PC-3 (cell line): ENCODE measurements at regions of chr5 and their contacts with region 1.

Region 1: DNA sequence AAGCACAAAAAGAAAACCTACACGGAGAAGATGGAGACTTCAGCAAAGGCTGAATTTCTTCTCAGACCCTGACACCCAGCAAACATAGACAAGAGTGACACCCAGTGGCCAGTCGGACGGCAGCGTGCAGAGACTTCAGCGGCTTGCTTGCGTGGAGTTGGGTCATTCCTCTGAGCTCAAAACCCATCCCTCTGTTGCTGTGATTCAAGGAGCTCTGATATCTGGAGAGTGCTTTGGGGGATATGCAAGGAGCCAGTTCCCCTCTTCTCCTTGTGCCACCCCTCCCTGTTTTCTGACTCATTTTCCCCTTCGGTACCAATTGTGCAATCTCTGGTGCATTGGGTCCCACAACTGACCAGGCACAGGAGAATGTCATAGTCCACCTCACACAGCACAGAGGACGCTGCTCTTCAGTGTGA is 27.5 kb downstream of the SH3TC2 start:
- DNase-seq: peak; percentile 98
- ATAC-seq: peak; percentile 92
- H3K4me3 ChIP-seq: no peak overlapping the region
- H3K27ac ChIP-seq: no peak overlapping the region
- H3K4me1 ChIP-seq: peaks cover 42% of the 10 kb centered on the region
- H3K27me3 ChIP-seq: no peaks in the 10 kb centered on the region
- CTCF ChIP-seq: peak; percentile 100

Region 2: GRCh38 chr5:148826053-148826738 is 209.2 kb before region 1 on chr5 and contains the start of gene ADRB2:
- CTCF ChIA-PET with region 1: interaction called, 5 read pairs
- POLR2A ChIA-PET with region 1: interaction called, 3 read pairs
- intact Hi-C with region 1: loop called (anchors 2 kb)
- DNase-seq: peak; percentile 100
- ATAC-seq: peak; percentile 83
- H3K4me3 ChIP-seq: peak within 1 kb of the TSS; percentile 73
- H3K27ac ChIP-seq: peak within 1 kb of the TSS; percentile 69
- H3K4me1 ChIP-seq: peaks cover 51% of the 10 kb centered on the region
- H3K27me3 ChIP-seq: no peaks in the 10 kb centered on the region
- CTCF ChIP-seq: no peak
- total RNA-seq, gene ADRB2: 41.1 and 42.1 TPM in 2 replicates

Region 3: GRCh38 chr5:148957591-148958202 is 77.7 kb before region 1 on chr5:
- CTCF ChIA-PET with region 1: interaction called, 13 read pairs
- POLR2A ChIA-PET with region 1: no interaction called
- intact Hi-C with region 1: loop called (anchors 2 kb)
- DNase-seq: peak; percentile 86
- ATAC-seq: no peak
- H3K4me3 ChIP-seq: no peak overlapping the region
- H3K27ac ChIP-seq: no peak overlapping the region
- H3K4me1 ChIP-seq: peaks cover 49% of the 10 kb centered on the region
- H3K27me3 ChIP-seq: no peaks in the 10 kb centered on the region
- CTCF ChIP-seq: peak; percentile 100

Region 4: GRCh38 chr5:149011074-149011476 is 24.3 kb before region 1 on chr5:
- CTCF ChIA-PET with region 1: interaction called, 12 read pairs
- POLR2A ChIA-PET with region 1: interaction called, 6 read pairs
- intact Hi-C with region 1: no loop called
- DNase-seq: peak; percentile 100
- ATAC-seq: peak; percentile 88
- H3K4me3 ChIP-seq: no peak overlapping the region
- H3K27ac ChIP-seq: peak overlapping the region; percentile 52
- H3K4me1 ChIP-seq: peaks cover 54% of the 10 kb centered on the region
- H3K27me3 ChIP-seq: no peaks in the 10 kb centered on the region
- CTCF ChIP-seq: peak; percentile 28

Region 5: DNA sequence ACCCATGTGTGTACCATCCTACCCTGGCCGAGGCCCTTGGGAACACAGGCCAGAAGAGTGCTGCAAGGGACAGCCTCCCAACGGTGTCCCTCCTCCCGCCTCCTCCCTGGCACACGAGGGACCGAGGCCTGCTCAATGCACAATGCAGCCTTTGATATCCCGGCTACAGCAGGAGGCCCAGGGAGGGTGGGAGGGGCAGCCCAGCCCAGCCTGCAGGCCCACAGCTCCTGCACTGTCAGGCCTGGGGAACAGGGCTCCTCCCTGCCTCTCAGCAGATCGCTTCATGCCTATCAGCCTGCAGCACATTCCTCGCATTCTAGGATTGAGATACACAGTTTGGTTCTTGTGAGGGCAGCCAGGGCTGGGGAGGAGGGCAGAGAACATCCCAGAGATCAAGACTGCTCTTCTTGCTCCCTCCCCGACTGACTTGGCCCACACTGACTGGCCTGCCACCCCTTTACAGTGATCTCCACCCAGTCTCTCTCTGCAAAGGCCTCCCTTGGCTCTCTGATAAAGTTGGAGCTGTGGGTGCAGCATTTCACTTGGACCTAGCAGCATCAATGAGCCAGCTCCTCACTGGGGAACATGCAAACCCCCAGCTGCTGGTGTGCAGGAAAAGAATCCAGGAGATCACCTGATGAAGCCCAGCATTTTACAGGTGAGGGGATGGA is 27.8 kb after region 1 on chr5 and contains the start of gene SH3TC2:
- CTCF ChIA-PET with region 1: interaction called, 7 read pairs
- POLR2A ChIA-PET with region 1: no interaction called
- intact Hi-C with region 1: loop called (anchors 1 kb)
- DNase-seq: peak; percentile 96
- ATAC-seq: peak; percentile 76
- H3K4me3 ChIP-seq: peak within 1 kb of the TSS; percentile 47
- H3K27ac ChIP-seq: peak within 1 kb of the TSS; percentile 95
- H3K4me1 ChIP-seq: peaks cover 58% of the 10 kb centered on the region
- H3K27me3 ChIP-seq: no peaks in the 10 kb centered on the region
- CTCF ChIP-seq: no peak
- total RNA-seq, gene SH3TC2: 32.0 and 40.0 TPM in 2 replicates

Region 6: DNA sequence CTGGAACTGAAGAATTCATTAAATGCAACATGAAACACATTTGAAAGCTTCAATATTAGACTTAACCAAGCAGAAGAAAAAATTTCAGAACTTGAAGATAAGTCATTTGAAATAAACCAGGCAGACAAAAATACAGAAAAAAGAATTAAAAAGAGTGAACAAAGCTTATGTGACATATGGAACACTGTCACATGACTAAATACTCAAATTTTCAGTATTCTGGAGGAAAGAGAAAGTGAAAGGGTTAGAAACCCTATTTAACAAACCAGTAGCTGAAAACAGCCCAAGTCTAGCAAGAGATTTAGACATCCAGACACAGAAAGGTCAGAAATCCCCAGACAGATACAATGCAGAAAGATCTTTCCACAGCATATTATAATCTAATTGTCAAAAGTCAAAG is 64.5 kb after region 1 on chr5:
- CTCF ChIA-PET with region 1: no interaction called
- POLR2A ChIA-PET with region 1: no interaction called
- intact Hi-C with region 1: no loop called
- DNase-seq: no peak
- ATAC-seq: no peak
- H3K4me3 ChIP-seq: no peak overlapping the region
- H3K27ac ChIP-seq: no peak overlapping the region
- H3K4me1 ChIP-seq: no peaks in the 10 kb centered on the region
- H3K27me3 ChIP-seq: no peaks in the 10 kb centered on the region
- CTCF ChIP-seq: no peak

Region 7: DNA sequence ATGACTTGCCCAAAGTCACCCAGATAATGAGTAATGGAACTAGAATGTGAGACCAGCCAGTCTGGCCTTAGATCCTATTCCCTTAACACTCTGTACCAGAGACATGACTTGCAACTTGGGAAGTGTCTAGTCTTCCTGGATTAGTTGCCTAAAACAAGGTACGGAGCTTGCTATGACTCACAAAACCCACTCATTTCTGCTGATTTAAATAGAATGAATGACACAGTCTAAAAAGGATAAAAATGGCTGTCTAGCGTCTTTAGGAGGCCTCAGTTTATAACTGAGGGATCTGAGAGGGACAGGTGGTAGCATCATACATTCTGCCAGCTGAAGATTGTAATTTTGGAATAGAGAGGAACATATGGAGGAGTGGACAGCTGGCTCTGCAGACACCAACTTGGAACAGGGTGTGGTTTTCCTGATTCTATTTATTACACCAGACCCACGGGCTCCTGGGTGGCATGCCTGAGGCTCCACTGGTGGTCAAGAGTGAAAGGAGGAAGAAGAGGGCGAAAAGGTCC is 168.6 kb after region 1 on chr5:
- CTCF ChIA-PET with region 1: no interaction called
- POLR2A ChIA-PET with region 1: no interaction called
- intact Hi-C with region 1: no loop called
- DNase-seq: peak; percentile 45
- ATAC-seq: no peak
- H3K4me3 ChIP-seq: no peak overlapping the region
- H3K27ac ChIP-seq: no peak overlapping the region
- H3K4me1 ChIP-seq: peaks cover 13% of the 10 kb centered on the region
- H3K27me3 ChIP-seq: no peaks in the 10 kb centered on the region
- CTCF ChIP-seq: no peak

Region 8: GRCh38 chr5:149605998-149606724 is 570.8 kb after region 1 on chr5:
- CTCF ChIA-PET with region 1: no interaction called
- POLR2A ChIA-PET with region 1: no interaction called
- intact Hi-C with region 1: no loop called
- DNase-seq: peak; percentile 100
- ATAC-seq: peak; percentile 97
- H3K4me3 ChIP-seq: no peak overlapping the region
- H3K27ac ChIP-seq: peak overlapping the region; percentile 93
- H3K4me1 ChIP-seq: peaks cover 42% of the 10 kb centered on the region
- H3K27me3 ChIP-seq: no peaks in the 10 kb centered on the region
- CTCF ChIP-seq: no peak